Activated CD4-positive, alpha-beta T cell treated with anti-CD3 and anti-CD28 coated beads for 36 hours (primary cell): ENCODE measurements at regions of chr7 and their contacts with region 1.

Region 1: DNA sequence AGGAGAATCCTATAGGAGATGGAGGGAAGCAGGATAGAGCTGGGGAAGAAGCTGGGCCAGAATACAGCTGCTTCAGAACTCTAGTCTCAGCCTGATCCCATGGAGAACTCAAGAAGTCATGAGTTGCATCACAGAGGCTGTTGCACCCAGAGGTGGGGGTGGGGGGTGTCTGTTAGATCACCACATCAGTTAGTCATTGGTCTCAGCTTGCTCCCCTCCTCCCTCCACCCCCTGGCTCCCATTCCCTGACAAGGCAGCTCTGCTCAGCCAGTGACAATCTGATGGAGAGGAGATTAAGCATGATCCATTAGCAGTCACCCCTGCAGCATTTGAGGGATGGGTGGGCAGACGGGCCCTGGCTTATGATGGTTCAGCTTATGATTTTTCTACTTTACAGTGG is 58.4 kb upstream of the FGL2 start:
- DNase-seq: peak; percentile 15
- ATAC-seq: no peak
- H3K4me3 Mint-ChIP-seq: no peak overlapping the region
- H3K27ac Mint-ChIP-seq: no peak overlapping the region
- H3K4me1 Mint-ChIP-seq: no peaks in the 10 kb centered on the region
- H3K27me3 Mint-ChIP-seq: no peaks in the 10 kb centered on the region

Region 2: GRCh38 chr7:77247206-77247850 is 10.7 kb before region 1 on chr7:
- CTCF ChIA-PET with region 1: interaction called, 15 read pairs
- POLR2A ChIA-PET with region 1: no interaction called
- intact Hi-C with region 1: no loop called
- DNase-seq: peak; percentile 94
- ATAC-seq: peak; percentile 95
- H3K4me3 Mint-ChIP-seq: no peak overlapping the region
- H3K27ac Mint-ChIP-seq: no peak overlapping the region
- H3K4me1 Mint-ChIP-seq: no peaks in the 10 kb centered on the region
- H3K27me3 Mint-ChIP-seq: no peaks in the 10 kb centered on the region

Region 3: DNA sequence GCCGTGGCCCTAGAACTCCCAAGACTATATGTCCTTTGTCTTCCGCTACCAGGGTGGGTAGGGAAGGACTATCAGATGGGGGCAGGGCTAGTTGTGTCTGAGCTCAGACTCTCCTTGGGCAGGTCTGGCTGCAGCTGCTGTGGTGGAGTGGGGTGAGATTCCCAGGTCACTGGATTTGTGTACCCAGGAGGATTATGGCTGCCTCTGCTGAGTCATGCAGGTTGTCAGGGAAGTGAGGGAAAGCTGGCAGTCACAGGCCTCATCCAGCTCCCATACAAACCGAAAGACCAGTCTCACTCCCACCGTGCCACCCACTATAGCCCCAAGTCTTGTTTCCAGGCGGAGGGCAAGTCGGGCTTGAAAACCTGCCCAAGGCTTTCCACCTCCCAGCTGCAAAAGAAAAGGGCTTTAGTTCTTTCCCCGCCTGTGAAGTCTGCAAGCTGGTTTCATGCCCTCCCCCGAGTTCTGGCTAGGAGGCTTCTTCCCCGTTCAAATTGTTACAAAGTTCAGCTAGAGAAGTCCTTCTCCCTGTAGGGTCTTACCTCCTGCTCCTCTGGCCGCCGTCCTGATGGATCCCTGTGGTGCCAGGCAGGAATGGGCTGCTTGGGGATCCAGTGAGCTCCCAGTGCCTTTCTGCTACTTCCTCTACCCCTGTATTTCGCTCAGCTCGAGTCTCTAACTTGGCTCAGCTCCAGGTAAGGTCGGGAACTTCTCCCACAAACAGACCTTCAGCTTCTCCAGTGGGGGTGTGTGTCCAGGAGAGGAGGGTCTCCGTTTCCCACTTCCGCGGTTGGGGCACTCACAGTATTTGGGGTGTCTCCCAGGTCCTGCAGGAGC is 48.4 kb after region 1 on chr7:
- CTCF ChIA-PET with region 1: no interaction called
- POLR2A ChIA-PET with region 1: no interaction called
- intact Hi-C with region 1: no loop called
- DNase-seq: no peak
- ATAC-seq: no peak
- H3K4me3 Mint-ChIP-seq: no peak overlapping the region
- H3K27ac Mint-ChIP-seq: no peak overlapping the region
- H3K4me1 Mint-ChIP-seq: no peaks in the 10 kb centered on the region
- H3K27me3 Mint-ChIP-seq: no peaks in the 10 kb centered on the region